ENCODE measurements at regions of chr10 and their contacts with region 1.

Region 1: GRCh38 chr10:84537447-84537931 is 209.1 kb downstream of the CCSER2 start:
- DNase-seq: peak; percentile 85
- H3K4me3 ChIP-seq: no peak overlapping the region; a peak in 1 of 4 replicates
- H3K27ac ChIP-seq: no peak overlapping the region
- H3K4me1 ChIP-seq: peaks cover 10 to 16% of the 10 kb centered on the region in 2 experiments; a peak in 3 of 4 replicates
- H3K27me3 ChIP-seq: no peaks in the 10 kb centered on the region
- CTCF ChIP-seq: peak; percentile 90
- EP300 ChIP-seq: no peak
- RAD21 ChIP-seq: peak; percentile 95

Region 2: GRCh38 chr10:84256510-84257342 is 280.8 kb before region 1 on chr10:
- CTCF ChIA-PET with region 1: interaction called, 201 read pairs
- POLR2A ChIA-PET with region 1: no interaction called
- DNase-seq: no peak
- H3K4me3 ChIP-seq: no peak overlapping the region
- H3K27ac ChIP-seq: no peak overlapping the region
- H3K4me1 ChIP-seq: peaks cover 0 to 5% of the 10 kb centered on the region in 2 experiments; a peak in 1 of 4 replicates
- H3K27me3 ChIP-seq: no peaks in the 10 kb centered on the region; the same call in 1 of the 2 replicates
- CTCF ChIP-seq: peak; percentile 15; the same call in 1 of the 2 replicates
- EP300 ChIP-seq: no peak
- RAD21 ChIP-seq: no peak

Region 3: DNA sequence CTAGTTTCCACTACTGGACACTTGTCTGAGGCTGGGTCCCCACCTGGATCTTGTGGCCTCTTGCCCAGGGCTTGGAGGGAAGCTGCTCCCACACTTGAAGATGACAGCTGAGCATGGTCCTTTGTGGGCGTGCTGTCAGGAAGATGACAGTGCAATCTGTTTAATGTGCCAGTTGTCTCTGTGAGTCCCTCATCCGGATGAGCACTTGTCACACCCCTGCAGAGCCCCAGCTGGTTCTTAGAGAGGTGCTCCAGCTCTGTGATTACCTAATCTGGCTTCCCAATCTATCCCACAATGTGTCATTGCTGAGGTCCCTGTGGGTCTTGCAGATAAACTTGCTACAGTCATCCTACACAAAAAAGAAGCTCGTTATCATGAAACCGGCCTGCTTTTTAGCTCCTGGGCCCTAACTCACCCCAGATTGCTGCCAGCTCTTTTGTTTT is 243.9 kb before region 1 on chr10:
- CTCF ChIA-PET with region 1: interaction called, 15 read pairs
- POLR2A ChIA-PET with region 1: no interaction called
- DNase-seq: peak; percentile 33
- H3K4me3 ChIP-seq: no peak overlapping the region
- H3K27ac ChIP-seq: no peak overlapping the region
- H3K4me1 ChIP-seq: peaks cover 7 to 15% of the 10 kb centered on the region in 2 experiments; a peak in 3 of 4 replicates
- H3K27me3 ChIP-seq: no peaks in the 10 kb centered on the region
- CTCF ChIP-seq: no peak
- EP300 ChIP-seq: no peak
- RAD21 ChIP-seq: no peak

Region 4: GRCh38 chr10:84352251-84352842 is 185.1 kb before region 1 on chr10:
- CTCF ChIA-PET with region 1: interaction called, 30 read pairs
- POLR2A ChIA-PET with region 1: no interaction called
- DNase-seq: peak; percentile 65
- H3K4me3 ChIP-seq: no peak overlapping the region
- H3K27ac ChIP-seq: no peak overlapping the region
- H3K4me1 ChIP-seq: peaks cover 0 to 9% of the 10 kb centered on the region in 2 experiments; a peak in 1 of 4 replicates
- H3K27me3 ChIP-seq: no peaks in the 10 kb centered on the region
- CTCF ChIP-seq: peak; percentile 80
- EP300 ChIP-seq: no peak
- RAD21 ChIP-seq: peak; percentile 68

Region 5: DNA sequence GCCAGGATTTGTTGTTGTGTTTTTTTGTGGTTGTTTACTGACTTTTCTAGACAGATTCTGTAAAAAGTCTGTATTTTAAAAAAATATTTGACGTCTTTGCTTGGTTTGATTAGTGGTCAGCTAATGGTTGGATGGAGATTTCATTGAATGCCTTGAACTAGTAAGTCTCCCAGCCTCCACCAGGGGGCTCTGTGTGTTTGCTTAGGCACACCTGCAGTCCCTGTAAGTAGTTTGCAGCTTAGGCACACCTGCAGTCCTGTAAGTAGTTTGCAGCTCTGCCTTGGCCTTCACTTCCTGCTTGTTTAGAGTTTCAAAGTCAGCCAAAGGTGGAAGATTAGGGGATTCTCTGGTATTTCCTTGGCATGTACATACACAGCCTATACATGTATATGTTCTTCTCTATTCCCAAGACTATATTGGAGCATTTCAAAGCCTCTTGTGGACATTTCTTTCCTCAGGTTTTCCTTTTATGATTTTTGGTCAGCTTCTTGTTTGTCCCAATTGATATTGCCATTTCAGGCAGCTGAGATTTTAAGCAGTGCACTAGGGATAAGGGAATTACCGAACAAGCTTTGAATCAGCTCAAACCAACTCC is 107.5 kb before region 1 on chr10:
- CTCF ChIA-PET with region 1: interaction called, 13 read pairs
- POLR2A ChIA-PET with region 1: no interaction called
- DNase-seq: peak; percentile 30
- H3K4me3 ChIP-seq: no peak overlapping the region
- H3K27ac ChIP-seq: no peak overlapping the region
- H3K4me1 ChIP-seq: peaks cover 4 to 11% of the 10 kb centered on the region in 2 experiments; a peak in 3 of 4 replicates
- H3K27me3 ChIP-seq: no peaks in the 10 kb centered on the region
- CTCF ChIP-seq: peak; percentile 73
- EP300 ChIP-seq: no peak
- RAD21 ChIP-seq: peak; percentile 59

Region 6: GRCh38 chr10:84613336-84614021 is 76.0 kb after region 1 on chr10:
- CTCF ChIA-PET with region 1: interaction called, 12 read pairs
- POLR2A ChIA-PET with region 1: no interaction called
- DNase-seq: peak; percentile 63
- H3K4me3 ChIP-seq: peak overlapping the region in 1 of 2 experiments; percentile 43; a peak in 1 of 4 replicates
- H3K27ac ChIP-seq: no peak overlapping the region
- H3K4me1 ChIP-seq: no peaks in the 10 kb centered on the region; a peak in 1 of 4 replicates
- H3K27me3 ChIP-seq: no peaks in the 10 kb centered on the region
- CTCF ChIP-seq: 0 out of 2 replicates have a peak, but pooled peaks have one; percentile 17
- EP300 ChIP-seq: no peak
- RAD21 ChIP-seq: peak; percentile 75